Right lobe of liver (tissue), 6 donors: ENCODE measurements at regions of chr6 and their contacts with region 1.

Region 1: DNA sequence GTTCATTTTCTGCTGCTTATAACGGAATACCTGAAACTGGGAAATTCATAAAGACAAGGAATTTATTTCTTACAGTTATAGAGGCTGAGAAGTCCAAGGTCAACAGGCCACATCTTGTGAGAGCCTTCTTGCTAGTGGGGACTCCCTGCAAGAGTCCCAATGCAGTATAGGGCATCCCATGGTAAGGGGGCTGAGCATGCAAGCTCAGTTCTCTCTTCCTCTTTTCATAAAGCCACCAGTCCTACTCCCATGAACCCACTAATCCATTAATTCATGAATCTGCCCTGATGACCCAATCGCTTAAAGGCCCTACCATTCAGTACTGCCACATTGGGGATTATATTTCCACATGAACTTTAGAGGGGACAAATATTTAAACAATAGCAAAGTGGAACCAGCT is 26.5 kb downstream of the CYB5R4 start:
- DNase-seq: no peak
- ATAC-seq: no peak
- H3K4me3 ChIP-seq: no peak overlapping the region
- H3K27ac ChIP-seq: no peak overlapping the region
- H3K4me1 ChIP-seq: no peaks in the 10 kb centered on the region
- H3K27me3 ChIP-seq: no peaks in the 10 kb centered on the region
- CTCF ChIP-seq: no peak
- POLR2A ChIP-seq: no peak

Region 2: GRCh38 chr6:84220809-84221409 is 334.9 kb after region 1 on chr6:
- intact Hi-C with region 1: loop called in 1 of 2 experiments (anchors 5 kb)
- DNase-seq: no peak
- ATAC-seq: peak in 1 of 4 donors; percentile 42
- H3K4me3 ChIP-seq: no peak overlapping the region
- H3K27ac ChIP-seq: no peak overlapping the region
- H3K4me1 ChIP-seq: no peaks in the 10 kb centered on the region
- H3K27me3 ChIP-seq: no peaks in the 10 kb centered on the region
- CTCF ChIP-seq: peak; percentile 58 to 62 (median 59)
- POLR2A ChIP-seq: no peak